ENCODE measurements at regions of chr11 and their contacts with region 1.

Region 1: GRCh38 chr11:1564535-1565172 is 7.4 kb downstream of the DUSP8 start:
- DNase-seq: no peak
- H3K4me3 Mint-ChIP-seq: no peak overlapping the region
- H3K27ac Mint-ChIP-seq: no peak overlapping the region
- H3K4me1 Mint-ChIP-seq: peaks cover 6% of the 10 kb centered on the region
- H3K27me3 Mint-ChIP-seq: no peaks in the 10 kb centered on the region

Region 2: GRCh38 chr11:1090600-1091331 is 473.9 kb before region 1 on chr11:
- CTCF ChIA-PET with region 1: no interaction called
- POLR2A ChIA-PET with region 1: no interaction called
- intact Hi-C with region 1: no loop called
- DNase-seq: no peak
- H3K4me3 Mint-ChIP-seq: no peak overlapping the region
- H3K27ac Mint-ChIP-seq: no peak overlapping the region
- H3K4me1 Mint-ChIP-seq: no peaks in the 10 kb centered on the region
- H3K27me3 Mint-ChIP-seq: no peaks in the 10 kb centered on the region

Region 3: GRCh38 chr11:1546536-1547400 is 17.9 kb before region 1 on chr11:
- CTCF ChIA-PET with region 1: interaction called, 113 read pairs
- POLR2A ChIA-PET with region 1: no interaction called
- intact Hi-C with region 1: no loop called
- DNase-seq: peak; percentile 52
- H3K4me3 Mint-ChIP-seq: no peak overlapping the region
- H3K27ac Mint-ChIP-seq: no peak overlapping the region
- H3K4me1 Mint-ChIP-seq: peaks cover 7% of the 10 kb centered on the region
- H3K27me3 Mint-ChIP-seq: peaks cover 22% of the 10 kb centered on the region